MCF 10A (cell line): ENCODE measurements at regions of chr5 and their contacts with region 1.

Region 1: GRCh38 chr5:177403792-177404640 is 3.6 kb upstream of the PFN3 start:
- DNase-seq: peak; percentile 89
- H3K4me3 Mint-ChIP-seq: peak overlapping the region; percentile 87
- H3K27ac Mint-ChIP-seq: peak overlapping the region; percentile 85
- H3K4me1 Mint-ChIP-seq: peaks cover 25% of the 10 kb centered on the region
- H3K27me3 Mint-ChIP-seq: no peaks in the 10 kb centered on the region
- CTCF ChIP-seq: peak; percentile 88

Region 2: GRCh38 chr5:177231479-177232250 is 172.4 kb before region 1 on chr5:
- CTCF ChIA-PET with region 1: no interaction called
- POLR2A ChIA-PET with region 1: no interaction called
- intact Hi-C with region 1: no loop called
- DNase-seq: no peak
- H3K4me3 Mint-ChIP-seq: no peak overlapping the region
- H3K27ac Mint-ChIP-seq: no peak overlapping the region
- H3K4me1 Mint-ChIP-seq: peaks cover 27% of the 10 kb centered on the region
- H3K27me3 Mint-ChIP-seq: no peaks in the 10 kb centered on the region
- CTCF ChIP-seq: no peak

Region 3: GRCh38 chr5:177241768-177242167 is 162.2 kb before region 1 on chr5:
- CTCF ChIA-PET with region 1: no interaction called
- POLR2A ChIA-PET with region 1: no interaction called
- intact Hi-C with region 1: no loop called
- DNase-seq: no peak
- H3K4me3 Mint-ChIP-seq: no peak overlapping the region
- H3K27ac Mint-ChIP-seq: no peak overlapping the region
- H3K4me1 Mint-ChIP-seq: no peaks in the 10 kb centered on the region
- H3K27me3 Mint-ChIP-seq: no peaks in the 10 kb centered on the region
- CTCF ChIP-seq: no peak

Region 4: GRCh38 chr5:177311723-177312648 is 92.0 kb before region 1 on chr5 and contains the start of gene MXD3:
- CTCF ChIA-PET with region 1: interaction called, 15 read pairs
- POLR2A ChIA-PET with region 1: interaction called, 11 read pairs
- intact Hi-C with region 1: loop called (anchors 2 kb)
- DNase-seq: peak; percentile 99
- H3K4me3 Mint-ChIP-seq: peak within 1 kb of the TSS; percentile 66
- H3K27ac Mint-ChIP-seq: peak within 1 kb of the TSS; percentile 51
- H3K4me1 Mint-ChIP-seq: peaks cover 29% of the 10 kb centered on the region
- H3K27me3 Mint-ChIP-seq: no peaks in the 10 kb centered on the region
- CTCF ChIP-seq: no peak
- total RNA-seq, gene MXD3: 8.4 and 13.2 TPM in 2 replicates

Region 5: DNA sequence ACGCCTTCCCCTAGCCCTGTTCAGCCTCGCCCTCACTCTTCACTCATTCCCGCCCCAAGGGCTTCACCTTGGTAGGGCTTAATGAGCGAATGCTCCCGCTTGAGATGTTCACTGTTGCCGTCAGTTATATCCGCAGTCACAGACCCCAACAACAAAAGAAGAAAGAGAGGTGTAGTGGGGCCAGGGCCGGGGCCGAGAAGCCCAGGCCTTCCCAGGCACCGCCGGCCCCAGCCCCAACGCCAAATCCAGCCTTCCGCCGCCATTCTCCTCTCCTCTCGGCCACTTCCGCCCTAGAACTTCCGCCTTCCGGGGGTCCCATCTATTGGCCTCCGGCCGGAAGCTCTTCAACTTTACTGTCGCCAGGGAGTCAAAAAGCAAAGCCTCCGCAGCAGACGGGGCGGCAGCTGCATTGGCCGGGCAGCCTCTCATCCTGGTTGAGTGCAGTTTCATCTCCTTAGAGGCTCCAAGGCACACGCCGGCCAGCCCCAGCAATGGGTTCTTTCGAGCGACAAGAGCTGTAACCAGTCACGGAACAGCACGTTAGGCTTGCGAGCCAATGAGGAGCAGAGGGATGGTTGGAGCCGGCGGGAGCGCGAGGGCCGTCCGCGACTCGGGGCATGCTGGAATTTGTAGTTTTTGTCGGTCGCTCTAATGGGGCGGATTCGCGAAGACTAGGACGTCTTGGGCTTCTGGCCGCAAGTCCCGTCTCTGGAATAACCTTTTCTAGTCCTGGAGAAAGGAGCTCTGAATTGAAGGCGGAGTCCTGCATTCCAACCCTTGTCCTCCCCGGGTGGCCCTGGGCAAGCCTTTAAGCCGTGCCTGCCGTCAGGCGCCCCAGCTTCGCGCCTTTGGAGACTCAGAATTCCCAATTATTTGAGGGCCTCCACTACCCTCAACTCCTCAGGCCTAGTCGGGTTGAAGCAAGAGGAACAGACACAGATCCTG is 52.4 kb before region 1 on chr5 and contains the start of gene LMAN2:
- CTCF ChIA-PET with region 1: interaction called, 22 read pairs
- POLR2A ChIA-PET with region 1: interaction called, 32 read pairs
- intact Hi-C with region 1: no loop called
- DNase-seq: peak; percentile 99
- H3K4me3 Mint-ChIP-seq: peak within 1 kb of the TSS; percentile 93
- H3K27ac Mint-ChIP-seq: peak within 1 kb of the TSS; percentile 98
- H3K4me1 Mint-ChIP-seq: peaks cover 24% of the 10 kb centered on the region
- H3K27me3 Mint-ChIP-seq: no peaks in the 10 kb centered on the region
- CTCF ChIP-seq: no peak
- total RNA-seq, gene LMAN2: 221 and 279 TPM in 2 replicates

Region 6: GRCh38 chr5:177390363-177391300 is 13.4 kb before region 1 on chr5:
- CTCF ChIA-PET with region 1: interaction called, 263 read pairs
- POLR2A ChIA-PET with region 1: interaction called, 137 read pairs
- intact Hi-C with region 1: loop called (anchors 1 kb)
- DNase-seq: peak; percentile 91
- H3K4me3 Mint-ChIP-seq: peak overlapping the region; percentile 49
- H3K27ac Mint-ChIP-seq: peak overlapping the region; percentile 76
- H3K4me1 Mint-ChIP-seq: peaks cover 33% of the 10 kb centered on the region
- H3K27me3 Mint-ChIP-seq: no peaks in the 10 kb centered on the region
- CTCF ChIP-seq: peak; percentile 99

Region 7: GRCh38 chr5:177446200-177447065 is 42.4 kb after region 1 on chr5 and contains the start of gene PRR7:
- CTCF ChIA-PET with region 1: interaction called, 277 read pairs
- POLR2A ChIA-PET with region 1: interaction called, 202 read pairs
- intact Hi-C with region 1: no loop called
- DNase-seq: peak; percentile 63
- H3K4me3 Mint-ChIP-seq: peak within 1 kb of the TSS; percentile 75
- H3K27ac Mint-ChIP-seq: peak within 1 kb of the TSS; percentile 70
- H3K4me1 Mint-ChIP-seq: peaks cover 21% of the 10 kb centered on the region
- H3K27me3 Mint-ChIP-seq: no peaks in the 10 kb centered on the region
- CTCF ChIP-seq: no peak
- total RNA-seq, gene PRR7: 15.0 and 23.2 TPM in 2 replicates

Region 8: GRCh38 chr5:177509381-177509951 is 105.5 kb after region 1 on chr5 and contains the start of gene DOK3:
- CTCF ChIA-PET with region 1: interaction called, 10 read pairs
- POLR2A ChIA-PET with region 1: interaction called, 3 read pairs
- intact Hi-C with region 1: no loop called
- DNase-seq: no peak
- H3K4me3 Mint-ChIP-seq: no peak within 1 kb of the TSS
- H3K27ac Mint-ChIP-seq: no peak within 1 kb of the TSS
- H3K4me1 Mint-ChIP-seq: peaks cover 8% of the 10 kb centered on the region
- H3K27me3 Mint-ChIP-seq: no peaks in the 10 kb centered on the region
- CTCF ChIP-seq: no peak
- total RNA-seq, gene DOK3: 5.4 and 6.0 TPM in 2 replicates